Common myeloid progenitor, CD34-positive (primary cell): ENCODE measurements at regions of chr4 and their contacts with region 1.

Region 1: GRCh38 chr4:81919238-81919637 is 447.5 kb upstream of the RASGEF1B start:
- DNase-seq: peak; percentile 32 to 56 (median 55)
- H3K4me3 ChIP-seq: no peak overlapping the region
- H3K27ac ChIP-seq: no peak overlapping the region
- H3K4me1 ChIP-seq: no peaks in the 10 kb centered on the region
- H3K27me3 ChIP-seq: no peaks in the 10 kb centered on the region

Region 2: GRCh38 chr4:81905971-81906370 is 13.3 kb before region 1 on chr4:
- CTCF ChIA-PET with region 1: interaction called, 12 read pairs
- POLR2A ChIA-PET with region 1: no interaction called
- DNase-seq: peak in 2 of 3 donors; percentile 51 to 55
- H3K4me3 ChIP-seq: no peak overlapping the region
- H3K27ac ChIP-seq: no peak overlapping the region
- H3K4me1 ChIP-seq: peaks cover 0 to 9% (median 9%) of the 10 kb centered on the region in 4 experiments
- H3K27me3 ChIP-seq: no peaks in the 10 kb centered on the region